Activated CD8-positive, alpha-beta T cell treated with anti-CD3 and anti-CD28 coated beads, Interleukin-2, amount 10 ng/mL, durations not matched to agents 7 days and 5 days (primary cell): ENCODE measurements at regions of chr19 and their contacts with region 1.

Region 1: DNA sequence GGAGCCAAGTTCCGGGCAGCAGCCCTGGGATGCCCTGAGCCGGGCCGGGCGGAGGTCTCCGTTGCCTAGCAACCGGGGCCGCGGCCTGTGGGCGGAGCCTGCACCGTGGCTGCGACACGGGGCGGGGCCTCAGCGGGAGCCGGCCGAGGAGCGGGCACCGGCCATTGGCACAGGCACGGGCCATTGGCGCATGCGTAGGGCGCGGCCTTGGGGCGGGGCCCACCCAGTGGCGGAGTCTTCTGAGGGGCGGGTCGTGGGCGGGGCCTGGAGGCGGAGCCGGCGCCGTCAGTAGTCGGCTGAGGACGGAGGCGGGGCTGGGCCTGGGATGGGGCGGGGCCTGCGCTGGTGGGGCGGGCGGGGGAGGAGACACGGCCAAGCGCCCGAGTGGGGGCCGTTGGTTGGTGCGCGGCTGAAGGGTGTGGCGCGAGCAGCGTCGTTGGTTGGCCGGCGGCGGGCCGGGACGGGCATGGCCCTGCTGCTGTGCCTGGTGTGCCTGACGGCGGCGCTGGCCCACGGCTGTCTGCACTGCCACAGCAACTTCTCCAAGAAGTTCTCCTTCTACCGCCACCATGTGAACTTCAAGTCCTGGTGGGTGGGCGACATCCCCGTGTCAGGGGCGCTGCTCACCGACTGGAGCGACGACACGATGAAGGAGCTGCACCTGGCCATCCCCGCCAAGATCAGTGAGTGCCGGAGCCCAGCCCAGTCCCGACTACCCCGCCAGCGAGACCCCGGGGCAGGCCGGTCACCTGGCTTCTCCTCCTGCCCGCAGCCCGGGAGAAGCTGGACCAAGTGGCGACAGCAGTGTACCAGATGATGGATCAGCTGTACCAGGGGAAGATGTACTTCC is at the start of gene IZUMO4:
- DNase-seq: peak; percentile 100
- ATAC-seq: peak; percentile 90
- H3K4me3 Mint-ChIP-seq: peak within 1 kb of the TSS; percentile 82
- H3K27ac Mint-ChIP-seq: peak within 1 kb of the TSS; percentile 88
- H3K4me1 Mint-ChIP-seq: peaks cover 28% of the 10 kb centered on the region
- H3K27me3 Mint-ChIP-seq: no peaks in the 10 kb centered on the region
- total RNA-seq, gene IZUMO4: 8.7 to 9.5 TPM

Region 2: GRCh38 chr19:2084993-2085720 is 11.5 kb before region 1 on chr19:
- CTCF ChIA-PET with region 1: interaction called, 22 read pairs
- POLR2A ChIA-PET with region 1: interaction called, 93 read pairs
- DNase-seq: peak; percentile 98
- ATAC-seq: peak; percentile 63
- H3K4me3 Mint-ChIP-seq: peak overlapping the region; percentile 99
- H3K27ac Mint-ChIP-seq: peak overlapping the region; percentile 98
- H3K4me1 Mint-ChIP-seq: peaks cover 62% of the 10 kb centered on the region
- H3K27me3 Mint-ChIP-seq: no peaks in the 10 kb centered on the region

Region 3: DNA sequence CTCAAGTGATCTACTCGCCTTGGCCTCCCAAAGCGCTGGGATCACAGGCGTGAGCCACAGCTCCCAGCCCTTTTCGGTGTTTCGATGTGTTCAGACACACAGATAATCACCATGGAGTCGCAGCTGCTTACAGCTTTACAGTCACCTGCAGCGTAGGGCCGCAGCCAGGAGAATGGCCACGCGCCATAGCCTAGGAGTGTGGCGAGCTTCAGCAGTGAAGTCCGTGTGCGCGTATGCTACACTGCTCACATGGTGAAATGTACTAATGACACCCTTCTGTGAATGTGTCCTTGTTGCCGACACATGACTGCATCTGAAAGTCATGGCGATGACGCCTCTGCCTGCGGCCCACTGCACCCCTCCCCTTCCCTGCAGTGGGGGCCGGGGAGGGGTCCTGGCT is 31.1 kb after region 1 on chr19:
- CTCF ChIA-PET with region 1: no interaction called
- POLR2A ChIA-PET with region 1: no interaction called
- DNase-seq: no peak
- ATAC-seq: no peak
- H3K4me3 Mint-ChIP-seq: no peak overlapping the region
- H3K27ac Mint-ChIP-seq: no peak overlapping the region
- H3K4me1 Mint-ChIP-seq: no peaks in the 10 kb centered on the region
- H3K27me3 Mint-ChIP-seq: no peaks in the 10 kb centered on the region

Region 4: DNA sequence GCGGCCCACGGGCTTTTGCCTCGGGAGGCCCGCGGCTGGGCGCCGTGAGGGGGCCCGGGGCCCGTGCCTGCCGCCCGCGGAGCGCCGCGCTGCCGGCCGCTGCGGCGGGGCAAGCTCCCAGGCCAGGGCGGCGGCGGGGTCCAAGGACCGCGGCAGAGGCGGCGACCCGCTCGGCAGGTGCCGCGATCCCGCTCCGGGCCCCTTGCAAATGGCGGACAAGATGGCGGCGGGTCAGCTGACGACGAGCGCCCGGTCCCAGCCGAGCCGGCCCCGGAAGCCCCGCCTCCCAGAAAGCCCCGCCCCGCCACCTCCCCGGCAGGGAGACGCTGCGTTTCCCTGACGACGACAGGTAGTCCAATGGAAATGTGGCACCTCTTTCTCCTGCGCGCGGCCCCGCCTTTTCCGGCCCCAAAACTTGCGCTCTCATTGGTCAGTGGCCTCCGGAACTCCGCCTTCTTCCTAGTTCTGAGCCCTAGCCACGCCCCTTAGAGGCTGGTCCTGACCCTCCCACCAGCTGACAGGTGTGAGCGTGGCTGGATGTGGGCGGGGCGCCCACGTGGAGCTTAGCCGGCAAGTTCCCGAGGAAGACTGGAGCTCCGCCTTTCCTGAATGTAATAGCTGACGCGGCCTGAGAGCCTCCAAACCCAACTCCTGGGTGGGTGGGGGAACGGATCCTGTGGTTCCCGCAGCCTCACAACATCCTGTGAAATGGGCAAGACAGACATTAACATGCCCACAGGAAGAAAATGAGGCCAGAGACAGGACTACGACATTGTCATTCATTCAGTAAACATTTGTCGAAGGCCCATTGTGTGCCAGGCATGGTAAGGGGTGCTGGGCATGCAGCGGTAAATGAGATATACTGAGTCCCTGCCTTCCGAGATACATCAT is 54.9 kb after region 1 on chr19 and contains the start of gene AP3D1:
- CTCF ChIA-PET with region 1: no interaction called
- POLR2A ChIA-PET with region 1: no interaction called
- DNase-seq: peak; percentile 100
- ATAC-seq: peak; percentile 86
- H3K4me3 Mint-ChIP-seq: peak within 1 kb of the TSS; percentile 82
- H3K27ac Mint-ChIP-seq: peak within 1 kb of the TSS; percentile 87
- H3K4me1 Mint-ChIP-seq: peaks cover 44% of the 10 kb centered on the region
- H3K27me3 Mint-ChIP-seq: no peaks in the 10 kb centered on the region
- total RNA-seq, gene AP3D1: 91.5 to 100 TPM